GM12878 (cell line): ENCODE measurements at regions of chr20 and their contacts with region 1.

Region 1: GRCh38 chr20:31698803-31699718 is 23.6 kb downstream of the BCL2L1 start:
- DNase-seq: no peak
- ATAC-seq: peak; percentile 96
- H3K4me3 ChIP-seq: peak overlapping the region; percentile 30; the same call in 1 of the 2 replicates
- H3K27ac ChIP-seq: peak overlapping the region; percentile 60
- H3K4me1 ChIP-seq: peaks cover 21% of the 10 kb centered on the region
- H3K27me3 ChIP-seq: no peaks in the 10 kb centered on the region
- CTCF ChIP-seq: no peak
- EP300 ChIP-seq: no peak
- POLR2A ChIP-seq: no peak
- RAD21 ChIP-seq: no peak

Region 2: DNA sequence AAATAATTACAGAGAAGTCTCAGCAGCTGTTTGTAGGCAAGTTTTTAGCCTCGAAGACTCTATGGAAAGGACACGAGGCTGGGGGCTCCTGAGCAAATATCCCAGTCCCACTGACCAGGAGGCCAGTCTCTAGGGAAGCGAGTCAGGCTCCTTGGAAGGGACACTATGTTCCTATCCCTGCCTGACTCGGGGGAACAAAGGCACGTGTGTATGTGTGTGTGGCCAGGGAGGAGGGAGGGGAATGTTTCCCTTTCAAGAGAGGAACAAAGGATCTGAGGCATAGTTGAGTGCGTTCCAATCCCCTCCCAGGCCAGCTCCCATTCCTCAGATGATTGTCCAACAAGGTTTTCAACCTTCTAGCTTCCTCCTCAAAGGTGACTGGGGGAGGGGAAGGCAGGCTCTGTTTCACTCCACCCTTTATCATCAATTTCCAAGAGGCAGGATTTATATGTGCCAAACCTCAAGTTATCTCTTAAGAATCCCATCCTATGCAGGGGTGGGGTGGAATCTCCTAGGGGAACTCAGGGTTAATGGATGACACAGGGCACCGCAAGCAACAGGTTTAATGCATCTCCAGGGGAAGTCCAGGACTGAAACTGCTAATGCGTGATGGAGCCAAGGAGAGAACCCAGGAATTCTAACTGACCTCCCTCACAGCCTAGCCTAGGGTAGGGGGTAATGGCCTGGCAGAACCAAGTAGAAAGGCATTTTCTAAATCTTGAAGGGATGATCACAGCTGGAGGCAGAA is 13.7 kb after region 1 on chr20:
- CTCF ChIA-PET with region 1: interaction called, 254 read pairs
- POLR2A ChIA-PET with region 1: interaction called, 34 read pairs
- RAD21 ChIA-PET with region 1: interaction called, 6 read pairs
- SMC1A ChIA-PET with region 1: interaction called, 56 read pairs
- in situ Hi-C with region 1: no loop called
- intact Hi-C with region 1: no loop called
- DNase-seq: no peak
- ATAC-seq: no peak
- H3K4me3 ChIP-seq: no peak overlapping the region
- H3K27ac ChIP-seq: no peak overlapping the region
- H3K4me1 ChIP-seq: peaks cover 28% of the 10 kb centered on the region
- H3K27me3 ChIP-seq: no peaks in the 10 kb centered on the region
- CTCF ChIP-seq: no peak
- EP300 ChIP-seq: no peak
- POLR2A ChIP-seq: no peak
- RAD21 ChIP-seq: no peak